AG04449 (cell line): ENCODE measurements at regions of chr2 and their contacts with region 1.

Region 1: DNA sequence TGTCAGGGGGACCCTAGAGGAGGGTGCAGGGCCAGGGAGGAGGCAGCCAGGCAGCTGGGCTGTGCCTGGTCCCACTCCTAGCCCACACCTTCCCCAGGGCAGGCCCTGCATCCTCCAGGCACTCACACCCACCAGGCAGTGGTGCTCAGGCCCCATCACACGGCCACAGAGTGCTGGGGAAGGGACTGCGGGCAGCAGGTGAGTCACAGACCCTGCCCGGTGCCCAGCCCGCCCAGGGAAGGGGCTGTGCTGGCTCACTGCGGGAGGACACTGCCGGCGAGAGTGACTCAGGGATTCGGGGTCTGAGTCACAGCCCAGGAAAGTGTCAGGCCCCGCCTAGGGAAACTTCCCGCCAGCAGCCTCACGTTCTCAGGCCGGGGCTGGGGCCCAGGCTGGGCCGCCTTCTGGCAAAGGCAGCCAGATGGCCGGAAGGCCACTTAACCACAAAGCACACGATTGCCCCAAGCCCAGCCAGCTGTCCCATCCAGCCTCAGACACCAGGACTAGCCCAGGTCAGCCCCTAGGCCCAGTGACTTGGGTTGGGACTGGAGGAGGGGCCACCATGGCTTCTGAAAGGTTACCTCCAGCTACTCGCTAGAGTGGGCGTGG is 42.2 kb downstream of the BIN1 start:
- DNase-seq: peak; percentile 79
- H3K4me3 ChIP-seq: no peak overlapping the region
- CTCF ChIP-seq: peak; percentile 27

Region 2: DNA sequence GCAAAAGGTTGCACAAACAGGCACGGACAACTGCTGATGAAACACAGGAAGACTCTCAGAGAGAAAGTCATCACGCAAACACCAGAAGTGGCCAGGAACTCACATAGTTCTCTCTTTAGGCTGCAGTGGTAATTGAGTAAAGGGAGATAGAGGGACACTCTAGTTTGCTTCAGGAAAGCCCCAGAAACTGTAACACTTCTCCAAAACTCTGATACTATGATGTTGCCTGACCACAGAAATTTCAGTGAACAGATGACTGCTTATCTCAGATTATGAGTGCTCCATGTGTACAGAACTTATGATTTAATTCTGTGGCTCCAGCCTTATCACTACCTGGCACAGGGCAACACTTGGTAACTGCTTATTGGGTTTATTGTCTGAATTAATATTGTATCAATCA is 720.3 kb before region 1 on chr2:
- CTCF ChIA-PET with region 1: no interaction called
- POLR2A ChIA-PET with region 1: no interaction called
- DNase-seq: no peak
- H3K4me3 ChIP-seq: no peak overlapping the region
- CTCF ChIP-seq: no peak

Region 3: GRCh38 chr2:126699716-126700581 is 364.8 kb before region 1 on chr2:
- CTCF ChIA-PET with region 1: no interaction called
- POLR2A ChIA-PET with region 1: no interaction called
- DNase-seq: no peak
- H3K4me3 ChIP-seq: no peak overlapping the region
- CTCF ChIP-seq: no peak

Region 4: GRCh38 chr2:127081826-127082633 is 17.3 kb after region 1 on chr2:
- CTCF ChIA-PET with region 1: interaction called, 95 read pairs
- POLR2A ChIA-PET with region 1: interaction called, 3 read pairs
- DNase-seq: no peak
- H3K4me3 ChIP-seq: no peak overlapping the region
- CTCF ChIP-seq: no peak